GM10248 (cell line): ENCODE measurements at regions of chr7 and their contacts with region 1.

Region 1: DNA sequence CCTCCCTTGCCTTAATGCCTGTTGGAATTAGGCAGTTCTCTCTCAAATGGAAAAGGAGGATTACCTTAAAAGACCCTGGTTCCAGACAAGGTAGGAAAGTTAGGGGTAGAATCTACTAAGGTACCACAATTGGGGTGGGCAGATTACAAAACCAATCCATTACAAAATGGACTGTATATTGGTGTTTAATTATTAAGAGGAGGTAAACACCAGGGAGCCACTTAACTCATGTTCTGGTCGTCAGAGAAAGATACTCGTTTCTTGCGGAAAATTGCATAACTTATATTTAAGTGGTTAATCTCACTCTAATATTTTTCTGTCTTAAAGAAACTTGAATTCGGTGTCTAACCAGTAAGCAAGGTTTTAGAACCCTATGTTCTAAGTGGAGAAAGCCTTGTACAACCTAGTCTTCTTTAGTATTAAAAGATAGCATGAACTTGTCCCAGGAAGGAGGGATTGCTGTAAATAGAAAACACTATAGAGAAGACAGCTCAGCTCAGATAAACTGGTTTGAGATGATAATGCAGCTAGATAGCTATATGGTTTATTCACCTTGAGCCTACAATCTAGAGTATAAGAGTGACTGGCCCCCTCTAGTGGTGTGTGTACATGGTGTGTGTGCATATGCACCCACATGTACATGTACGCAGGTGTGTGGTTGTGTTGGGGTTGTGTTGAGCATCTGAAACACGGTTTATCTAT is 58.0 kb upstream of the STRIP2 start:
- DNase-seq: peak; percentile 45
- CTCF ChIP-seq: peak; percentile 83

Region 2: GRCh38 chr7:128692623-128693270 is 683.5 kb before region 1 on chr7:
- CTCF ChIA-PET with region 1: no interaction called
- POLR2A ChIA-PET with region 1: no interaction called
- DNase-seq: no peak
- CTCF ChIP-seq: no peak

Region 3: DNA sequence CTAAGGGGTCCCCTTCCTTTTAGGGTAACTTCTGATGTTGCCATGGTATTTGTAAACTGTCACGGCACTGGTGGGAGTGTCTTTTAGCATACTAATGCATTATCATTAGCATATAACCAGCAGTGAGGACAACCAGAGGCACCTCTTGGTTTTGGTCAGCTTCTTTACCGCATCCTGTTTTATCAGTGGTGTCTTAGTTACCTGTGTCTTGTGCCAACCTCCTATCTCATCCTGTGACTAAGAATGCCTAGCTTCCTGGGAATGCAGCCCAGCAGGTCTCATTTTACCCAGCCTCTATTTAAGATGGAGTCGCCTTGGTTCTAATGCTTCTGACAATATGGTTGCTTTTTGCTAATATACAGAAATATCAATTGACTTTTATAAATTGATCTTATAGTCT is 96.5 kb before region 1 on chr7:
- CTCF ChIA-PET with region 1: no interaction called
- POLR2A ChIA-PET with region 1: no interaction called
- DNase-seq: no peak
- CTCF ChIP-seq: no peak

Region 4: DNA sequence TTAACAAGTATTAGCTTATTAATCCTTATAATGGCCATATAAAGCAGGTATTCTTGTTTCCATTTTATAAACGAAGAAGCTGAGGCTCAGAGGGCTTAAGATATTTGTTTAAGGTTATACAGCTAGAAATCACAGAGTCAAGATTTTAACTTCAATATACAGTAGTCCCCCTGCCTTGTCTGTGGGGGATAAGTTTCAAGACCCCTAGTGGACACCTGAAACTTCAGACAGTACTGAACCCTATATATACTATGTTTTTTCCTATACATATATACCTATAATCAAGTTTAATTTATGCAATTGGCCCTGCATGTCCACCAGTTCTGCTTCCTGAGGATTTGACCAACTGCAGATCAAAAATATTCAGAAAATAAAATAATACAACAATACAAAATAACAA is 13.6 kb after region 1 on chr7:
- CTCF ChIA-PET with region 1: interaction called, 59 read pairs
- POLR2A ChIA-PET with region 1: no interaction called
- DNase-seq: no peak
- CTCF ChIP-seq: no peak

Region 5: DNA sequence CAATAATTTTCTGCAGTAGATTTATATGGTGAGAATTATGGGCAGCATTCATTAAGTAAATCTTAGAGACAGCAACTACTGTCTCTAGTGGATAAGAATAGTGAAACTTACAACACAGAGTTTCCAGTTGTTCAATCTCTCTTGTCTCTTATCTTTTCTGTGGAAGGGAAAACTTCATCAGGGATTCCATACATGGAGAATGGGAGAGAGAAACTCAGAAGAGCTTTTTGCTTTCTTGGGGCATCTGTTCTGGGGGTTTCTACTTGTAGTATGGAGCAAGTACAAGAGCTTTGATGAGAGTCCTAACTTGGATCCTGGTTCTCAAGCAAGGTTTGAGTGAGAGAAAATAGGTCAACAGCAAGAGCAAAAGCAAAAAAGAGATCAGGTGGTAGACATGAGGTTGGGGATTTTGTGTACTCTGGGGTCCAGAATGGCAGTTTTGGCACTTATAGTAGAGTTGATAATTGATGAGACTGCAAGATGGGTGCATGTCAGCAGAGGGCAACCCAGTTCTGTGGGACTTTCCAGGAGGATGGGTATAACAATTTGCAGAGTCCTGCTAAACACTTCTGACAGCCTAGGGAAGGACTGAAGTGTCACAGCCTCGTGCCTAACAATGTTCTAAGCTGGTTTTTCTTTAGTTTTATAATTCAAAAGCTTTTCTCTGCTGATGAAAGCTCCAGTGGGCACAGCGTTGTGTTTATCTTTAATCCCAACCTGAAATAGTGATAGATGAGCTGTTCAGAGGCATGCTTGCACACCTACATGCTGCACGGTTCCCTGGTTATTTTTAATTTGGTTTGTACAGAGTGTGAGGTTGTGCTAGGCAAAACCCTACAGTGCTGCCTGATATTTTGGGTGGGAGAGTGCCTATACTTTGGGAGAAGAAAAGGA is 26.0 kb after region 1 on chr7:
- CTCF ChIA-PET with region 1: interaction called, 22 read pairs
- POLR2A ChIA-PET with region 1: no interaction called
- DNase-seq: peak; percentile 31
- CTCF ChIP-seq: peak; percentile 27

Region 6: GRCh38 chr7:129454249-129454551 is 78.0 kb after region 1 on chr7:
- CTCF ChIA-PET with region 1: interaction called, 15 read pairs
- POLR2A ChIA-PET with region 1: no interaction called
- DNase-seq: no peak
- CTCF ChIP-seq: no peak